HCT116 (cell line): ENCODE measurements at regions of chr2 and their contacts with region 1.

Region 1: DNA sequence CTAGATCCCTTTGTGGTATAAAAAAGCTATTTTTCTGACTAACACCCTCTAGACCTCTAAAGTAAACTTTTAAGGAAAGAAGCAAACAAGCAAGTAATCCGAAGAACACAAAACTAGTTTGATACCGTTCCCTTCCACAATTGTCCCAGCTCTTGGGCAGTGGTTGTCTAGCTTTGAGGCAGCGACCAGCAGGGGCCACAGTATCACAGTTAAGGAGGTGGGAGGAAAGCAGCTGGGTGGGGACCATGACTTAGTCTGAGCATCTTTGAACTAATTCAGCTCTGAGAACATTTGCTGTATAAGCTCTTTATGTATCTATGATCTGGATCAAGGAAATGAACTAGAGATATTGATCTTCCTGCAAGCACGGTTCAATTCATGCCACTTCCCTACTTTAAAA is 51.0 kb downstream of the SF3B1 start:
- DNase-seq: no peak
- ATAC-seq: 0 out of 2 replicates have a peak, but pooled peaks have one; percentile 35
- H3K4me3 ChIP-seq: no peak overlapping the region
- H3K27ac ChIP-seq: no peak overlapping the region
- H3K4me1 ChIP-seq: no peaks in the 10 kb centered on the region
- H3K27me3 ChIP-seq: no peaks in the 10 kb centered on the region
- CTCF ChIP-seq: 0 out of 6 replicates have a peak, but pooled peaks of 2 of the 3 experiments have one; percentile 5 to 11
- POLR2A ChIP-seq: no peak
- RAD21 ChIP-seq: peak; percentile 43

Region 2: GRCh38 chr2:196291873-196292800 is 1091.7 kb before region 1 on chr2:
- CTCF ChIA-PET with region 1: no interaction called
- POLR2A ChIA-PET with region 1: no interaction called
- RAD21 ChIA-PET with region 1: no interaction called
- intact Hi-C with region 1: loop called (anchors 10 kb)
- DNase-seq: peak; percentile 75
- ATAC-seq: peak; percentile 88
- H3K4me3 ChIP-seq: peak overlapping the region in 1 of 2 experiments; percentile 24; a peak in 2 of 4 replicates
- H3K27ac ChIP-seq: no peak overlapping the region
- H3K4me1 ChIP-seq: peaks cover 15 to 34% of the 10 kb centered on the region in 2 experiments; a peak in 3 of 4 replicates
- H3K27me3 ChIP-seq: no peaks in the 10 kb centered on the region
- CTCF ChIP-seq: no peak
- POLR2A ChIP-seq: no peak
- RAD21 ChIP-seq: no peak

Region 3: DNA sequence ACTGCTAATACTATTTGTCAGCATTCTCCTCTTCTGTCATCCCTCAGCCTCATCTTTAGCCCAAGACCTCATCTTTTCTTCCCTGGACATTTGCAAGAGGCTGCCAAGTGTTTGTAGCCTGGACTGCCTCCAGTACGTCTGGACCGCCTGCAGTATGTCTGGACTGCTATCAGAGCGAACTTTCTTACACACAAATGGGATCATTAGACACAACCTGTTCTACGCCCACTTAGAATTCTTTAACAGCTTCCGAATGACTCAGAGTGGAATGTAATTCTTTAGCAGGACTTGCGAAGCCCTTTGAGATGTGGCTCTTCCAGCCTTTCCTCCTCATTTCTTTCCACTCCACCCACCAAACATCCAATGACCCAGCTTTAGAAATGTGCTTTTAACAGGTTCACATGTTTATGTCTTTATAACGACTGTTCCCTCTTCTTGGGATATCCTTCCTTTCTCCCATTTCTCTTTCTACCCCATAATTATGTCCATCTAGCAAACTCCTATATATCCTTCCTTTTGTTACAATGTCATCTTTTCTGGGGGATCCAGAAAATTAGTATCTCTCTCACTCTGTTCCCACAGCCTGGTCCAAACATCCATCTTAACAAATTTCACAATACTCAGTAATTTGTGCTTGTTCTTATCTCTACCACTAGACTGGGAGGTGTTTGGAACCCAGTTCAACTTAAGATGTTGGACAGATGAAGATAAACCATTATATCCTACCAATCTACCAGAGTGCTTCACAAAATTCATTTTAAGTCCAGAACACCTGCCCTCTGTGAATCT is 286.1 kb before region 1 on chr2:
- CTCF ChIA-PET with region 1: no interaction called
- POLR2A ChIA-PET with region 1: no interaction called
- RAD21 ChIA-PET with region 1: no interaction called
- intact Hi-C with region 1: no loop called
- DNase-seq: no peak
- ATAC-seq: no peak
- H3K4me3 ChIP-seq: no peak overlapping the region
- H3K27ac ChIP-seq: no peak overlapping the region
- H3K4me1 ChIP-seq: peaks cover 0 to 7% of the 10 kb centered on the region in 2 experiments; a peak in 2 of 4 replicates
- H3K27me3 ChIP-seq: no peaks in the 10 kb centered on the region
- CTCF ChIP-seq: no peak
- POLR2A ChIP-seq: no peak
- RAD21 ChIP-seq: no peak